ENCODE measurements at regions of chr3 and their contacts with region 1.

Region 1: GRCh38 chr3:32319607-32320006 is 72.0 kb upstream of the CMTM7 start:
- DNase-seq: no peak
- H3K4me3 ChIP-seq: no peak overlapping the region
- H3K27ac ChIP-seq: no peak overlapping the region
- H3K4me1 ChIP-seq: no peaks in the 10 kb centered on the region
- H3K27me3 ChIP-seq: no peaks in the 10 kb centered on the region
- CTCF ChIP-seq: no peak

Region 2: DNA sequence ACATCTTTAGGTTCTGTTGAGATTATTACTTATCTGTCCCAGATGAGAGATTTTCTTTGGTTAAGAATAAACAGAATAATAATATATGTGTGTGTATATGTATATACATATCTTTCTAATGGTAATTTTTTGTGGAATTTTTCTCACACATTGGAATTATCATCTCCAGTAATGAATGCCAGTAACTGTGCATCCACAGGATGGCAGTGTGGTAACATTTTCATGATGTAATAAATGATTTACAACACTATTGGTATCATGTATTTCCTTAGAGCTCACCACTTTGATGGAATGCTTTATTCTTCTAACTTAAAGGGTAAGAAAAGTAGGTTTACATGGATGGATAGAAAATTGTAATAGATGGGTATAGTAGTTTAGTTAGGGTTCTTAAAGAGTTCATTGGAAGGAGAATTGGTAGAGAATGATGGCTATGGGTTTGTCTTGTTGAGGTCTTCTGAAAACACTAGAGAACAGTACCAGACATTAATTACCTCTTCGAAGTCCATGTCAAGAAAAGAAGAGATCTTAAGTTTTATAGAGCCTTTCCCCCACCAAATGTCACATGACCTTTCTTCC is 708.8 kb before region 1 on chr3:
- CTCF ChIA-PET with region 1: no interaction called
- dilution Hi-C with region 1: no loop called
- in situ Hi-C with region 1: no loop called
- intact Hi-C with region 1: no loop called
- DNase-seq: peak; percentile 36
- H3K4me3 ChIP-seq: no peak overlapping the region
- H3K27ac ChIP-seq: no peak overlapping the region
- H3K4me1 ChIP-seq: peaks cover 4% of the 10 kb centered on the region
- H3K27me3 ChIP-seq: no peaks in the 10 kb centered on the region
- CTCF ChIP-seq: peak; percentile 48 to 64

Region 3: GRCh38 chr3:32502118-32502945 is 182.7 kb after region 1 on chr3 and contains the start of gene CMTM6:
- CTCF ChIA-PET with region 1: interaction called, 20 read pairs
- dilution Hi-C with region 1: no loop called
- in situ Hi-C with region 1: no loop called
- intact Hi-C with region 1: no loop called
- DNase-seq: peak; percentile 72
- H3K4me3 ChIP-seq: peak within 1 kb of the TSS; percentile 71 to 92 (median 76)
- H3K27ac ChIP-seq: peak within 1 kb of the TSS; percentile 77
- H3K4me1 ChIP-seq: peaks cover 3% of the 10 kb centered on the region
- H3K27me3 ChIP-seq: no peaks in the 10 kb centered on the region
- CTCF ChIP-seq: peak in 1 of 2 donors; percentile 4
- total RNA-seq, gene CMTM6: 70.0 to 174 TPM

Region 4: DNA sequence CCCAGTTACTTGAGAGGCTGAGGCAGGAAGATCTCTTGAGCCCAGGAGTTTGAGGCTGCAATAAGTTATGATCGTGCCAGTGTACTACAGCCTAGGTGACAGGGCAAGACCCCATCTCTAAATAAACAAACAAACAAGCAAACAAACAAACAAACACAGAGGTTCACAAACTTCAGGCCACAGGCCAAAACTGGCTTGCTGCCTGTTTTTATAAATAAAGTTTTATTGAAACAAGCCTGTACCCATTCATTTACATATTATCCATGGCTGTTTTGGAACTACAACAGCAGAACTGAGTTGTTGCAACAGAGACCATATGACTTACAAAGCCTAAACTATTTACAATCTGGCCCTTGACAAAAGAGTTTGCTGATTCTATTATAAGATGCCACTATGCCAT is 244.6 kb after region 1 on chr3:
- CTCF ChIA-PET with region 1: no interaction called
- dilution Hi-C with region 1: no loop called
- in situ Hi-C with region 1: no loop called
- intact Hi-C with region 1: no loop called
- DNase-seq: no peak
- H3K4me3 ChIP-seq: no peak overlapping the region
- H3K27ac ChIP-seq: no peak overlapping the region
- H3K4me1 ChIP-seq: peaks cover 5% of the 10 kb centered on the region
- H3K27me3 ChIP-seq: no peaks in the 10 kb centered on the region
- CTCF ChIP-seq: no peak